Common myeloid progenitor, CD34-positive (primary cell): ENCODE measurements at regions of chr1 and their contacts with region 1.

Region 1: GRCh38 chr1:244302889-244303613 is 148.7 kb downstream of the ADSS2 start:
- DNase-seq: no peak
- H3K4me3 ChIP-seq: no peak overlapping the region
- H3K27ac ChIP-seq: peak overlapping the region in 1 of 2 experiments; percentile 65
- H3K4me1 ChIP-seq: peaks cover 0 to 20% (median 9%) of the 10 kb centered on the region in 4 experiments
- H3K27me3 ChIP-seq: no peaks in the 10 kb centered on the region

Region 2: GRCh38 chr1:244231572-244232315 is 71.3 kb before region 1 on chr1:
- CTCF ChIA-PET with region 1: no interaction called
- POLR2A ChIA-PET with region 1: no interaction called
- DNase-seq: peak in 1 of 3 donors; percentile 13
- H3K4me3 ChIP-seq: peak overlapping the region in 1 of 7 experiments; percentile 16
- H3K27ac ChIP-seq: no peak overlapping the region
- H3K4me1 ChIP-seq: peaks cover 0 to 10% (median 0%) of the 10 kb centered on the region in 4 experiments
- H3K27me3 ChIP-seq: no peaks in the 10 kb centered on the region

Region 3: DNA sequence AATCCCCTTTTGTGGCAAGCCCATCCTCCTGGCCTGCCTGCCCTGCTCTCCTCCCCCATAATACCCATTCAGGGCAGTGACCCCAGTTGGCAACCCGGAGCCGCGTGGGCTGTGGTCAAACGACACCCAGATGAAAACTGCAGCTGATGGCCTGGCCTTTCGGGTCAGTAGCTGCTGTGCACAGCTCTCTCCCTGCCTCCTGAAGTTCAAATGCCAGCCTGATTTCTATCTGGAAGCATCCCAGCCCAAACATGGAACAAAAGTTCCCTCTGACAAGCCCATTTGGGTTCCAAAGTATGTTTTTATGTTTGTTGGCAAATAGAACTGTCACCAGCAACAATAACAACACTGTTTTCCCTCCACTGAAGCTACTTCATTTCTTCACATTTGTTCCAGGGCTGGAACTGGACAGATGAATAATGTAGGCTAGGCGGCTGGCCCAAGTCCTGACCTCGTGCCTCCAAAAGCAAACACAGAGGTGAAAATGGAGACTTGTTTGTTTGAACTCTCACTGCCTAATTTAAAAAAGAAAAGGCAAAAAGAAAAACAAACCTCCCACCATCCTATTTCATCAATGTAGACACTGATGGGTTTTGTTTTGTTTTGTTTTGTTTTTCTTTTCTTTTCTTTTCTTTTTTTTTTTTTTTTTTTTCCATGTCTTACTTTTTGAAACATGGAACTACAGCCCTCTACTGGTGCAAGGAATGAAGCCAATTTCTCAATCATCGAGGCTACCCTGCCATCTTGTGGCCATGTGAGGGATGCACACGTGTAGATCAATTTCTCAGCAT is 30.4 kb before region 1 on chr1:
- CTCF ChIA-PET with region 1: interaction called, 16 read pairs
- POLR2A ChIA-PET with region 1: no interaction called
- DNase-seq: peak; percentile 89 to 95 (median 91)
- H3K4me3 ChIP-seq: no peak overlapping the region
- H3K27ac ChIP-seq: no peak overlapping the region
- H3K4me1 ChIP-seq: peaks cover 0 to 14% (median 12%) of the 10 kb centered on the region in 4 experiments
- H3K27me3 ChIP-seq: no peaks in the 10 kb centered on the region

Region 4: GRCh38 chr1:244291236-244292201 is 11.5 kb before region 1 on chr1:
- CTCF ChIA-PET with region 1: interaction called, 18 read pairs
- POLR2A ChIA-PET with region 1: no interaction called
- DNase-seq: peak; percentile 17 to 74 (median 68)
- H3K4me3 ChIP-seq: peak overlapping the region in 2 of 7 experiments; percentile 25 to 42
- H3K27ac ChIP-seq: no peak overlapping the region
- H3K4me1 ChIP-seq: peaks cover 11 to 19% (median 17%) of the 10 kb centered on the region in 4 experiments
- H3K27me3 ChIP-seq: no peaks in the 10 kb centered on the region

Region 5: DNA sequence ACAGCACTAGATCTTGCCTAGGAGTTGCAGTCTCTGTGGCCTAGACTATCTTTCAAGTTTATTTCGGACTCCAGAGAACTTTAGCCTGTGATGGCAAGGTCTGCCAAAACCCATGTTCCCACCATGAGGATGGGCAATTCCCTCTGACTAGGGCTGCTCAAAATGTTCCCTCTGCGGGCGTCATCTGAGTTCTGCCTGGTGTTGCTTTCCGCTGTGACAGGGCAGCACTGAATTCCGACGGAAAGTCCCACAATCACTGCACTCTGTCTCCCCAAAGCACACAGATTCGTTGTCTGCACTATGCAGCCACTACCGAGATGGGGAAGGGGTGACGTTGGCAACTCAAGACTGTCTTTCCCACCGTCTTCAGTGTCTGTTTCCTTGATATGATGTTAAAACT is 233.3 kb after region 1 on chr1:
- CTCF ChIA-PET with region 1: no interaction called
- POLR2A ChIA-PET with region 1: no interaction called
- DNase-seq: no peak
- H3K4me3 ChIP-seq: no peak overlapping the region
- H3K27ac ChIP-seq: no peak overlapping the region
- H3K4me1 ChIP-seq: no peaks in the 10 kb centered on the region
- H3K27me3 ChIP-seq: no peaks in the 10 kb centered on the region